ENCODE measurements at regions of chr9 and their contacts with region 1.

Region 1: GRCh38 chr9:19048966-19049916 is at the start of gene RRAGA:
- DNase-seq: peak; percentile 97
- ATAC-seq: peak; percentile 89
- H3K4me3 Mint-ChIP-seq: peak within 1 kb of the TSS; percentile 95
- H3K27ac Mint-ChIP-seq: peak within 1 kb of the TSS; percentile 96
- H3K4me1 Mint-ChIP-seq: peaks cover 26% of the 10 kb centered on the region
- H3K27me3 Mint-ChIP-seq: no peaks in the 10 kb centered on the region
- total RNA-seq, gene RRAGA: 42.4 to 53.4 TPM

Region 2: DNA sequence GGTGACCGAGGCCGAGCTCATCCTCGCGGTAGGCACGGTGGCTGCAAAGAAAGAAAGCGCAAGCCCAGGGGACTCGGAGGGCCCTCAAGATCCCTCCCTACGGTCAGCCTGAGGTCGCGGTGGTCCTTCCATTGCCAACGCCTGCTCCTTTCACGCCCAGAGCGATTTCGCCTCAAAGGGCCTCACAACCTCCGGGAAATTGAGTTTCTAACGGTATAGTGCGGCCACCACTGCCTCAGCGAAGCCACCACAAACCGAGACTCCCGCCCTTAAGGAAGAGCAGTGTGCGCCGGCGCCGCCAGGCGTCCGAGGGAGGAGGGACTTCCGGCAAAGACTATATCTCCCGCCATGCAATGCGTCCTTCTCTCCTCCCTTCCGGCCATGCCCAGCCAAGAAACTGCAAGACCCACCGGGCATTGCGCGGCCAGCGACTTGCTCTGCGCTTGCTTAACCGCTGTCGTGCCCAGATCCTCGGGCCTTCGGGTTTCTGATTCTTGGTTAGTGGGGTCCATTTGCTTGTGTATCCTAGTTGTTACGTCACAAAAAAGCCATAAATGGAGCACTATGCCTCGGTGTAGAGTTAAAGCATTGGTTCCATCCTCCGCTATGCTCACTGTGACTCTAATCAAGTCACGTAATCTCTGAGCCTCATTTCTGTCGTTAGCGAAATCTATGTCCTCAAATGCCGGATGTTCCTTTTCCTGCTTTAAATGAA is 53.5 kb after region 1 on chr9 and contains the start of gene HAUS6:
- CTCF ChIA-PET with region 1: interaction called, 8 read pairs
- POLR2A ChIA-PET with region 1: interaction called, 3 read pairs
- intact Hi-C with region 1: loop called (anchors 1 kb)
- DNase-seq: peak; percentile 98
- ATAC-seq: peak; percentile 98
- H3K4me3 Mint-ChIP-seq: peak within 1 kb of the TSS; percentile 96
- H3K27ac Mint-ChIP-seq: peak within 1 kb of the TSS; percentile 96
- H3K4me1 Mint-ChIP-seq: peaks cover 25% of the 10 kb centered on the region
- H3K27me3 Mint-ChIP-seq: no peaks in the 10 kb centered on the region
- total RNA-seq, gene HAUS6: 29.3 to 32.5 TPM

Region 3: GRCh38 chr9:19184144-19184917 is 135.1 kb after region 1 on chr9:
- CTCF ChIA-PET with region 1: interaction called, 10 read pairs
- POLR2A ChIA-PET with region 1: no interaction called
- intact Hi-C with region 1: loop called in 1 of 2 experiments (anchors 1 kb)
- DNase-seq: peak; percentile 91
- ATAC-seq: peak; percentile 99
- H3K4me3 Mint-ChIP-seq: peak overlapping the region; percentile 56
- H3K27ac Mint-ChIP-seq: peak overlapping the region; percentile 91
- H3K4me1 Mint-ChIP-seq: peaks cover 21% of the 10 kb centered on the region
- H3K27me3 Mint-ChIP-seq: no peaks in the 10 kb centered on the region

Region 4: GRCh38 chr9:19408693-19409400 is 359.6 kb after region 1 on chr9 and contains the start of gene ACER2:
- CTCF ChIA-PET with region 1: interaction called, 3 read pairs
- POLR2A ChIA-PET with region 1: no interaction called
- intact Hi-C with region 1: loop called in 1 of 2 experiments (anchors 1 kb)
- DNase-seq: peak; percentile 96
- ATAC-seq: peak; percentile 96
- H3K4me3 Mint-ChIP-seq: peak within 1 kb of the TSS; percentile 89
- H3K27ac Mint-ChIP-seq: peak within 1 kb of the TSS; percentile 68
- H3K4me1 Mint-ChIP-seq: peaks cover 6% of the 10 kb centered on the region
- H3K27me3 Mint-ChIP-seq: no peaks in the 10 kb centered on the region
- total RNA-seq, gene ACER2: 1.5 to 1.6 TPM

Region 5: GRCh38 chr9:19464764-19465585 is 415.7 kb after region 1 on chr9:
- CTCF ChIA-PET with region 1: interaction called, 13 read pairs
- POLR2A ChIA-PET with region 1: no interaction called
- intact Hi-C with region 1: no loop called
- DNase-seq: peak; percentile 83
- ATAC-seq: peak; percentile 89
- H3K4me3 Mint-ChIP-seq: peak overlapping the region; percentile 77
- H3K27ac Mint-ChIP-seq: peak overlapping the region; percentile 71
- H3K4me1 Mint-ChIP-seq: peaks cover 7% of the 10 kb centered on the region
- H3K27me3 Mint-ChIP-seq: no peaks in the 10 kb centered on the region